A549 (cell line): ENCODE measurements at regions of chr19 and their contacts with region 1.

Region 1: GRCh38 chr19:46283771-46284170 is 13.1 kb upstream of the HIF3A start:
- DNase-seq: no peak
- ATAC-seq: no peak
- H3K4me3 ChIP-seq: no peak overlapping the region
- H3K27ac ChIP-seq: no peak overlapping the region
- H3K4me1 ChIP-seq: peaks cover 1% of the 10 kb centered on the region
- CTCF ChIP-seq: no peak
- EP300 ChIP-seq: no peak
- POLR2A ChIP-seq: no peak
- RAD21 ChIP-seq: no peak

Region 2: GRCh38 chr19:46319613-46320012 is 35.8 kb after region 1 on chr19:
- CTCF ChIA-PET with region 1: interaction called, 23 read pairs
- POLR2A ChIA-PET with region 1: no interaction called
- DNase-seq: no peak
- ATAC-seq: no peak
- H3K4me3 ChIP-seq: no peak overlapping the region
- H3K27ac ChIP-seq: no peak overlapping the region
- H3K4me1 ChIP-seq: no peaks in the 10 kb centered on the region
- CTCF ChIP-seq: no peak
- EP300 ChIP-seq: no peak
- POLR2A ChIP-seq: no peak
- RAD21 ChIP-seq: no peak

Region 3: GRCh38 chr19:46373421-46374359 is 89.9 kb after region 1 on chr19:
- CTCF ChIA-PET with region 1: interaction called, 131 read pairs
- POLR2A ChIA-PET with region 1: interaction called, 6 read pairs
- DNase-seq: peak; percentile 88 to 93
- ATAC-seq: peak; percentile 80 to 87
- H3K4me3 ChIP-seq: peak overlapping the region; percentile 21; the same call in 2 of the 3 replicates
- H3K27ac ChIP-seq: peak overlapping the region; percentile 90 to 94
- H3K4me1 ChIP-seq: peaks cover 49% of the 10 kb centered on the region
- CTCF ChIP-seq: peak; percentile 19; the same call in 1 of the 3 replicates
- EP300 ChIP-seq: peak in 1 of 2 experiments; percentile 6; a peak in 1 of 5 replicates
- POLR2A ChIP-seq: peak; percentile 21
- RAD21 ChIP-seq: no peak; a peak in 1 of 5 replicates

Region 4: GRCh38 chr19:46478356-46478986 is 194.7 kb after region 1 on chr19:
- CTCF ChIA-PET with region 1: interaction called, 27 read pairs
- POLR2A ChIA-PET with region 1: no interaction called
- DNase-seq: peak in 1 of 2 experiments; percentile 61
- ATAC-seq: peak; percentile 33 to 56; a peak in 3 of 6 replicates
- H3K4me3 ChIP-seq: no peak overlapping the region
- H3K27ac ChIP-seq: no peak overlapping the region
- H3K4me1 ChIP-seq: 0 out of 3 replicates have a peak, but pooled peaks cover 2% of the 10 kb centered on the region
- CTCF ChIP-seq: no peak
- EP300 ChIP-seq: no peak
- POLR2A ChIP-seq: no peak
- RAD21 ChIP-seq: no peak

Region 5: GRCh38 chr19:46513461-46514236 is 229.9 kb after region 1 on chr19:
- CTCF ChIA-PET with region 1: interaction called, 106 read pairs
- POLR2A ChIA-PET with region 1: no interaction called
- DNase-seq: peak; percentile 83 to 88
- ATAC-seq: peak; percentile 91 to 94
- H3K4me3 ChIP-seq: no peak overlapping the region
- H3K27ac ChIP-seq: peak overlapping the region in 1 of 2 experiments; percentile 52; a peak in 1 of 6 replicates
- H3K4me1 ChIP-seq: peaks cover 16% of the 10 kb centered on the region; the same call in 2 of the 3 replicates
- CTCF ChIP-seq: peak; percentile 97
- EP300 ChIP-seq: no peak
- POLR2A ChIP-seq: no peak
- RAD21 ChIP-seq: peak; percentile 95 to 97